Natural killer cell (primary cell): ENCODE measurements at regions of chr3 and their contacts with region 1.

Region 1: GRCh38 chr3:170307671-170308403 is 49.7 kb upstream of the SKIL start:
- DNase-seq: no peak
- ATAC-seq: no peak
- H3K4me3 ChIP-seq: no peak overlapping the region
- H3K4me3 Mint-ChIP-seq: no peak overlapping the region
- H3K27ac ChIP-seq: no peak overlapping the region
- H3K27ac Mint-ChIP-seq: no peak overlapping the region
- H3K4me1 ChIP-seq: peaks cover 3% of the 10 kb centered on the region
- H3K4me1 Mint-ChIP-seq: no peaks in the 10 kb centered on the region
- H3K27me3 ChIP-seq: no peaks in the 10 kb centered on the region
- H3K27me3 Mint-ChIP-seq: no peaks in the 10 kb centered on the region
- CTCF ChIP-seq: no peak

Region 2: DNA sequence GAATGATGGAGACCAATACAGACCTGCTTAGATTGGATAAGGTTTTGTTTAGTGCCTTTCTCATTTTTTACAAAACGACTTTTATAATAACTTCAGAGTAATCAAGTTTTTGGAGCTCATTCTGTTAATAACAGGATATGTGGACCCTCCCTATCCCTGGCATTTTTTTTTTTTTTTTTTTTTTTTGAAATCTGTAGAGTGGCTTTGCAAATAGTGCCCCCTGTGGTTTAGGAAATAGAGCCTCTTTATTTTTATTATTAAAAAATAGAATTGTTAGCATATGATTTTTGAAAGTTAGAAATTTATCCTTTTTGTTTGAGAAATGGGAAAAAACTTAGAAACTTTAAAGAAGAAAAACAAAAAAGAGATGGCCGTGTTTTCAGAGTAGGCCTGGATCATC is 61.1 kb after region 1 on chr3:
- intact Hi-C with region 1: loop called (anchors 2 kb)
- DNase-seq: peak in 1 of 2 donors; percentile 51
- ATAC-seq: peak in 1 of 3 donors; percentile 36
- H3K4me3 ChIP-seq: no peak overlapping the region
- H3K4me3 Mint-ChIP-seq: no peak overlapping the region
- H3K27ac ChIP-seq: no peak overlapping the region
- H3K27ac Mint-ChIP-seq: no peak overlapping the region
- H3K4me1 ChIP-seq: peaks cover 4% of the 10 kb centered on the region
- H3K4me1 Mint-ChIP-seq: peaks cover 14 to 24% of the 10 kb centered on the region in 2 donors
- H3K27me3 ChIP-seq: no peaks in the 10 kb centered on the region
- H3K27me3 Mint-ChIP-seq: no peaks in the 10 kb centered on the region
- CTCF ChIP-seq: peak; percentile 58

Region 3: GRCh38 chr3:170414202-170414663 is 106.4 kb after region 1 on chr3:
- intact Hi-C with region 1: loop called (anchors 5 kb)
- DNase-seq: peak in 1 of 2 donors; percentile 69
- ATAC-seq: peak; percentile 70 to 78 (median 76)
- H3K4me3 ChIP-seq: no peak overlapping the region
- H3K4me3 Mint-ChIP-seq: no peak overlapping the region
- H3K27ac ChIP-seq: no peak overlapping the region
- H3K27ac Mint-ChIP-seq: no peak overlapping the region
- H3K4me1 ChIP-seq: peaks cover 9% of the 10 kb centered on the region
- H3K4me1 Mint-ChIP-seq: peaks cover 0 to 6% of the 10 kb centered on the region in 2 donors
- H3K27me3 ChIP-seq: peaks cover 5% of the 10 kb centered on the region
- H3K27me3 Mint-ChIP-seq: peaks cover 22 to 27% of the 10 kb centered on the region in 2 donors
- CTCF ChIP-seq: peak; percentile 94

Region 4: DNA sequence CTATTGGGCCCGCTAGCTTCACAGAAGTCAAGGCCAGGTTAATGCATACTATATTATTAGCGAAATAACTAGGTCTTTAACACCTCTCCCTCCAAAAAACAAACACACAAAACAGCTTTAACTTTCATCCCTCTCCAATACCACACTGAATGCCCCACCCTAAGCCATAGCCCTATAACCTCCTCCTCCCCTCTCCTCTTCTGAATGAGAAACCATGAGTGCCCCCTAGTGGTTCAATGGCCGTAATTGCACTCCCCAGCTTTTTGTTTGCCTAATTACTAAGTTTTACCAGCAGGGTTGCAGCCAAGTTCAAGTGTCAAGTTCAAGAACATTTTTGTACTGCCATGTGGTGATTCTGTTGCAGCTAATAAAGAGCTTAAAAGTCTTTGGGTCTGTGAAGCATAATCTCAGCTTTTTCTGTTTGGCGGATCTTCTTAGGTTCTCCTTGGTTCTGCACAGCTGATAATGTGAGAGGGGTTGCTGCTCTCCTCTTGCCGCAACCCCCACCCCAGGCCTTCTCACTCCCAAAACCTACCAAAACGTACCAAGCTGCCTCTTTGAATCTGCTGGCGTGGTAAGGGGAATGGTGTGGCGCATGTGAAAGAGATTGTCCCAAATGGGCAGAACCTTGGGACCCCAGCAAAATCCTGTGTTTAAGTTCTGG is 504.2 kb after region 1 on chr3:
- intact Hi-C with region 1: loop called (anchors 1 kb)
- DNase-seq: peak; percentile 45 to 83
- ATAC-seq: peak; percentile 87 to 99 (median 98)
- H3K4me3 ChIP-seq: no peak overlapping the region
- H3K4me3 Mint-ChIP-seq: no peak overlapping the region
- H3K27ac ChIP-seq: no peak overlapping the region
- H3K27ac Mint-ChIP-seq: no peak overlapping the region
- H3K4me1 ChIP-seq: no peaks in the 10 kb centered on the region
- H3K4me1 Mint-ChIP-seq: peaks cover 6 to 7% of the 10 kb centered on the region in 2 donors
- H3K27me3 ChIP-seq: no peaks in the 10 kb centered on the region
- H3K27me3 Mint-ChIP-seq: peaks cover 0 to 6% of the 10 kb centered on the region in 2 donors
- CTCF ChIP-seq: peak; percentile 93